T-cell (primary cell): ENCODE measurements at regions of chr5 and their contacts with region 1.

Region 1: DNA sequence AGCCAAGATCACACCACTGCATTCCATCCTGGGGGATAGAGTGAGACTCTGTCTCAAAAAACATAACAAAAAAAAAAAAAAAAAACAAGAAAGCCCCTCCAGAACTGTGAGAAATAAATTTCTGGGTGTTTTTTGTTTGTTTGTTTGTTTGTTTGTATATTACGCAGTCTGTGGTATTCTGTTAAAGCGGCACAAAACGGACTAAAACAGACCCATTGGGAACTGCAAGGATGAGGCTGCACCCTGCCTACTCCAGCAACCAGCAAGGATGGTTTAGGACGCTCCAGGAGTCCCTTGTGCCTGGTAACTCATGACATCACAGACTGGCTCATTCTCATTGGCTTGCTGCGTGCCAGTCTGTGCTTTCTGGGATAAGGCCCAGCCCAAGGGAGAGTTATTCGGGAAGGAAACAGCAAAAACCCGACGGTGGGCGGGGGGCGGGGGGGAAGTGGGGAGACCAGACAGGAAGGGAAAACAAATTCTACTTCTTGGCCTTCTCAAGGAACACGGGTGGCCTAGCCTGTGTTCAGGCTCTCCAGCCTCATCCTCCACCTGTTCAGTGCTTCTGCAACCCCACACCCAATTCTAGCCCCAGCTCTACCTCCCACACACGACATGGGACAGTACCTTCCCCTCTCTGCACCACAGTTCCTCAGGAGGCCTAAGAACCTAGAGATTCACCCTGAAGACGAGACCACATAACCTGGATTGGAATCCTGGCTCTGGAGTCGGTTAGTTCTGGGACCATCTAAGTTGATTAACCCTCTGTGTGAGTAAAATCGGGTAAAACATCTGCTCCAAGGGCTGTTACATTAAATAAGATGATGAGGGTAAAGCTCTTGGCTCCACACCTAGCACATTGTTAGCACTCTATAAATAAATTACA is 2.8 kb downstream of the CD74 start:
- DNase-seq: peak in 20 of 35 experiments; percentile 19 to 73 (median 33)
- ATAC-seq: peak in 2 of 4 experiments; percentile 21 to 27
- H3K4me3 ChIP-seq: peak overlapping the region; percentile 0 to 66
- H3K4me3 Mint-ChIP-seq: peak overlapping the region; percentile 88 to 97 (median 96)
- H3K27ac ChIP-seq: peak overlapping the region; percentile 94
- H3K27ac Mint-ChIP-seq: peak overlapping the region; percentile 99 to 100
- H3K4me1 ChIP-seq: peaks cover 20 to 71% of the 10 kb centered on the region in 2 experiments
- H3K4me1 Mint-ChIP-seq: peaks cover 43 to 60% (median 54%) of the 10 kb centered on the region in 3 donors
- H3K27me3 ChIP-seq: no peaks in the 10 kb centered on the region
- H3K27me3 Mint-ChIP-seq: no peaks in the 10 kb centered on the region

Region 2: DNA sequence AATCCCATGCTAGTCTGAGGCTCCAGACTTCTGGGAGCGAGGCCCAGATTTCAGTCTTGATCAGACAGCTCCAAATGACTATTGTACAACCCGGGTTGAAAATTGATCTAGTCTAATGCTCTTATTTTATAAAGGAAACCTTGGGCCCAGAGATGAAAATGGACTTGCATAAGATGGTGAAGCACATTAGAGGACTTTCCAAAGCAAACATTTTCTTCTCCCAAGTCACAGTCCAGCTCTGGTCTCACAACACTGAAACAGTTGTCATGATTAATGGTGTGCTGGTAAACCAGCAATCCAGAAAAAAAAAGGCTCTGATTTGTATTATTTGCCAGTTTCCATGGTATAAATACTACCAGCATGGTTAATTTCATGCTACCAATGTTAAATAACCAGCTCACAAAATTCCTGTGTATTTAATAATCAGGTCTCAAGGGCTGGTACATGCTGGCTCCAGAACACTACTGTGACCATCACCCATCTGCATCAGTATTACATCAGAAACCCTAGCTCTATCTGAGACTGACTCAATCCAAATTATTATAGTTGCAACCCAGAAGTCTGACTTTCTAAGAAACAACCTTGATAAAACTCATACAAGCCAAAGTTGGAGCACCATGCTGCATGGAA is 1301.1 kb before region 1 on chr5:
- CTCF ChIA-PET with region 1: no interaction called
- POLR2A ChIA-PET with region 1: no interaction called
- DNase-seq: no peak
- ATAC-seq: no peak
- H3K4me3 ChIP-seq: no peak overlapping the region
- H3K4me3 Mint-ChIP-seq: no peak overlapping the region
- H3K27ac ChIP-seq: no peak overlapping the region
- H3K27ac Mint-ChIP-seq: no peak overlapping the region
- H3K4me1 ChIP-seq: no peaks in the 10 kb centered on the region
- H3K4me1 Mint-ChIP-seq: no peaks in the 10 kb centered on the region
- H3K27me3 ChIP-seq: no peaks in the 10 kb centered on the region
- H3K27me3 Mint-ChIP-seq: no peaks in the 10 kb centered on the region

Region 3: GRCh38 chr5:150189728-150190502 is 220.0 kb before region 1 on chr5 and contains the start of gene SLC6A7:
- CTCF ChIA-PET with region 1: no interaction called
- POLR2A ChIA-PET with region 1: no interaction called
- DNase-seq: no peak
- ATAC-seq: no peak
- H3K4me3 ChIP-seq: no peak within 1 kb of the TSS
- H3K4me3 Mint-ChIP-seq: no peak within 1 kb of the TSS
- H3K27ac ChIP-seq: no peak within 1 kb of the TSS
- H3K27ac Mint-ChIP-seq: no peak within 1 kb of the TSS
- H3K4me1 ChIP-seq: no peaks in the 10 kb centered on the region
- H3K4me1 Mint-ChIP-seq: no peaks in the 10 kb centered on the region
- H3K27me3 ChIP-seq: peaks cover 14 to 53% of the 10 kb centered on the region in 2 experiments
- H3K27me3 Mint-ChIP-seq: peaks cover 31 to 55% of the 10 kb centered on the region in 2 donors
- total RNA-seq, gene SLC6A7: not detected

Region 4: DNA sequence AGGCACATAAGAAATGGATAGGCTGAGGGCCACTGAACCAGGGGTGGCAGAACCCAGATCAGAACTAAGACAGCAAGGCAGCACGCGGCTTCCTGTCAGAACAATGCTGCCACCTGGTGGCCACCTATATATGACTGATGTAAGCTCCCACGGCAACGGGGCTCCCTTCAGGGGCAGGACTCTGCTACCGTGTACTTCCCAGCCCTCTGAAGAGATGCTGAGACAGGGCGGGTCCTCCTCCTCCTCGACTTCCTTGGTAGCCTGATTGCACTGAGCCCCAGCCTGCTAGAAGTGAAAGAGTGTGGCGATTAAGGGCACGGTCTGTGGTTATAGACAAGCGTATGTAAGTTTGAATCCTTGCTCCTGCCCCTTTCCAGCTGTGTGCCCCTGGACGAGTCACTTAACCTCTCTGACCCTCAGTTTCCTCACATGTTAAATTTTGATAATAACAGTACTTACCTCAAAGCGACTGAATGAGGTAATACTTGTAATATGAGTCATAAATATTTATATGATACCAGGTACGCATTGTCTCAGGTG is 26.3 kb after region 1 on chr5:
- CTCF ChIA-PET with region 1: interaction called, 8 to 18 read pairs
- POLR2A ChIA-PET with region 1: interaction called, 3 to 5 read pairs
- DNase-seq: peak; percentile 76 to 96 (median 88)
- ATAC-seq: peak; percentile 94 to 98 (median 96)
- H3K4me3 ChIP-seq: no peak overlapping the region
- H3K4me3 Mint-ChIP-seq: no peak overlapping the region
- H3K27ac ChIP-seq: peak overlapping the region; percentile 2
- H3K27ac Mint-ChIP-seq: peak overlapping the region; percentile 68 to 80
- H3K4me1 ChIP-seq: peaks cover 2 to 6% of the 10 kb centered on the region in 2 experiments
- H3K4me1 Mint-ChIP-seq: peaks cover 7 to 9% (median 8%) of the 10 kb centered on the region in 3 donors
- H3K27me3 ChIP-seq: no peaks in the 10 kb centered on the region
- H3K27me3 Mint-ChIP-seq: no peaks in the 10 kb centered on the region

Region 5: GRCh38 chr5:150449517-150450339 is 39.8 kb after region 1 on chr5 and contains the start of gene RPS14:
- CTCF ChIA-PET with region 1: interaction called, 3 to 16 read pairs
- POLR2A ChIA-PET with region 1: interaction called, 6 to 10 read pairs
- DNase-seq: peak; percentile 88 to 98 (median 94)
- ATAC-seq: peak; percentile 93 to 96 (median 95)
- H3K4me3 ChIP-seq: peak within 1 kb of the TSS; percentile 94 to 97
- H3K4me3 Mint-ChIP-seq: peak within 1 kb of the TSS; percentile 87 to 99 (median 95)
- H3K27ac ChIP-seq: peak within 1 kb of the TSS; percentile 97
- H3K27ac Mint-ChIP-seq: peak within 1 kb of the TSS; percentile 100
- H3K4me1 ChIP-seq: peaks cover 18 to 31% of the 10 kb centered on the region in 2 experiments
- H3K4me1 Mint-ChIP-seq: peaks cover 26 to 37% (median 35%) of the 10 kb centered on the region in 3 donors
- H3K27me3 ChIP-seq: no peaks in the 10 kb centered on the region
- H3K27me3 Mint-ChIP-seq: no peaks in the 10 kb centered on the region
- total RNA-seq, gene RPS14: 4,124 to 5,450 (median 5,009) TPM

Region 6: GRCh38 chr5:150497274-150497988 is 87.5 kb after region 1 on chr5:
- CTCF ChIA-PET with region 1: no interaction called
- POLR2A ChIA-PET with region 1: no interaction called
- DNase-seq: no peak
- ATAC-seq: no peak
- H3K4me3 ChIP-seq: no peak overlapping the region
- H3K4me3 Mint-ChIP-seq: no peak overlapping the region
- H3K27ac ChIP-seq: no peak overlapping the region
- H3K27ac Mint-ChIP-seq: no peak overlapping the region
- H3K4me1 ChIP-seq: no peaks in the 10 kb centered on the region
- H3K4me1 Mint-ChIP-seq: no peaks in the 10 kb centered on the region
- H3K27me3 ChIP-seq: peaks cover 0 to 5% of the 10 kb centered on the region in 2 experiments
- H3K27me3 Mint-ChIP-seq: no peaks in the 10 kb centered on the region

Region 7: GRCh38 chr5:150589871-150590601 is 180.2 kb after region 1 on chr5:
- CTCF ChIA-PET with region 1: no interaction called
- POLR2A ChIA-PET with region 1: no interaction called
- DNase-seq: no peak
- ATAC-seq: no peak
- H3K4me3 ChIP-seq: no peak overlapping the region
- H3K4me3 Mint-ChIP-seq: no peak overlapping the region
- H3K27ac ChIP-seq: no peak overlapping the region
- H3K27ac Mint-ChIP-seq: no peak overlapping the region
- H3K4me1 ChIP-seq: no peaks in the 10 kb centered on the region
- H3K4me1 Mint-ChIP-seq: no peaks in the 10 kb centered on the region
- H3K27me3 ChIP-seq: peaks cover 0 to 14% of the 10 kb centered on the region in 2 experiments
- H3K27me3 Mint-ChIP-seq: peaks cover 0 to 3% of the 10 kb centered on the region in 2 donors